Tibial artery (tissue), 4 donors: ENCODE measurements at regions of chr19 and their contacts with region 1.

Region 1: DNA sequence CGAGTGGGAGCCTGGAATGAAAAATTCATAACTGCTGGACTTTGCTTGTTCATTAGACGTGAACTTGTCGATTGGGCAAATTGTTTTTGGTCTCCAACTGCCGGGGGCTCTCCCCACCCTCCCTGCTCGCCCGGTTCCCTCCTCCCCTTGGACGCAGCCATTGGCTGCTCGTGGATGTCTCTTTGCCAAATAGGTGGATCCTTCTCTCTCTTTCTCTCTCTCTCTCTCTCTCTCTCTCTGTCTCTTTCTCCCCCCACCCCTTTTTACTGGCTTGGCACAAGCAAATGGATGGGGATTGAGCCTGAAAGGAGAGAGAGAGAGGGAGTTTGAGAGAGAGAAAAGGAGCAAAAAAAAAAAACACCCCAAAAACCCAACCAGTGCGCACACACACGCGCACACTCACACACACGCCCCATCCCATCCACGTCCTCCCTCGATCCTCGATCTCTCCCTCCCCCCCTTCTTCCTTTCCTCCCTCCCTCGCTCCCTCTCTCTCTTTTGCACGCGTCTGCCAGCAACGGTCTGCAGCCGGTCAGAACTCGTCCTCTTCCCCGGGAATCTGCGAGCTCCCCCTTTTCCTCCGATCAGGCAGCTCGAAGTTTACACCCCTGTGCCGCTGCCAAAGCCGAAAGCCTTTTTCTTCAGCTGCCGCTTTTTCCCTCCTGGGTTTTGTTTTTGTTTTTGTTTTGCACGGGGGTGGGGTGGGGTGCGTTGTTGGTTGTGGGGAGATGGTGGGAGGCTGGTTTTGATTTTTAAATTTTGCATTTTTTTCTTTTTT is 27.8 kb downstream of the NFIX start:
- DNase-seq: peak; percentile 90 to 95
- H3K4me3 ChIP-seq: peak overlapping the region; percentile 50 to 51
- H3K27ac ChIP-seq: peak overlapping the region; percentile 88 to 99
- H3K4me1 ChIP-seq: peaks cover 14 to 94% (median 80%) of the 10 kb centered on the region in 4 donors
- H3K27me3 ChIP-seq: no peaks in the 10 kb centered on the region
- CTCF ChIP-seq: peak in 1 of 2 experiments; percentile 47

Region 2: GRCh38 chr19:13055213-13056051 is 32.4 kb after region 1 on chr19:
- intact Hi-C with region 1: loop called (anchors 5 kb)
- DNase-seq: peak; percentile 86 to 95
- H3K4me3 ChIP-seq: peak overlapping the region; percentile 24 to 35
- H3K27ac ChIP-seq: peak overlapping the region; percentile 92 to 99
- H3K4me1 ChIP-seq: peaks cover 0 to 100% (median 99%) of the 10 kb centered on the region in 4 donors
- H3K27me3 ChIP-seq: no peaks in the 10 kb centered on the region
- CTCF ChIP-seq: peak in 1 of 2 experiments; percentile 6